ENCODE measurements at regions of chr3 and their contacts with region 1.

Region 1: DNA sequence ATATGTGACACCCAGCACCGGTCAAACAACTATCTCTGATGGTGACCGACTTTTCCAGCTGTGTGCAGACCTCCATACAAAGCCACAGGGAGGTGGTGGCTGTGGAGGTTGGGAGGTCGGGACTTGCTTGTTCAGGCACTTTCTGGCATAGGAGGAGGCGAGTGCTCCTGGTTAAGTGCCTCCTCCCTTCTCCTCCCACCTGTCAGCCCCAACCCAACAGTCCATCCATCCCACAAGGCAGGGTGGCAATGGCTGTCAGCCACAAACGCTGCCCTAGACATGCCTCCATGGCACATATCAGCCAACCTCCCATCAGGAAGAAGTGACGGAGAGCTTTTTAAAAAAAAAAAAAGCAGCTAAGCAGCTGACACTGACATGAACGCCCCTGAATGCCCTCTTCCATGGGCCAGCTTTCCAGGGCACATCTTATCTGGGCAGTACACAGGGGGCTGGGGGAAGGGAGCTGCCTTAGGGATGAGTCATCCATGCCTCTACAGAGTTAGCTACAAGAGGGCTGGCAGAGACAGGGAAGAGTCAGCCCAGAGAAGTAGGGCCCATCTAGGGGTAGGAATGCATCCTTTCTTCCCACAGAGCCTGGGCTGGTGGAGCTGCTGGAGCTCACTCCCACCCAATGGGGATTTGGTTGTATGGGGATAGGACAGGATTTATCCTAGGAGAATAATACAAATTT is 41.2 kb downstream of the CCDC12 start:
- DNase-seq: peak; percentile 86 to 90
- H3K4me3 ChIP-seq: no peak overlapping the region
- H3K27ac ChIP-seq: peak overlapping the region; percentile 53
- H3K4me1 ChIP-seq: peaks cover 63% of the 10 kb centered on the region
- H3K27me3 ChIP-seq: no peaks in the 10 kb centered on the region
- CTCF ChIP-seq: peak; percentile 65

Region 2: DNA sequence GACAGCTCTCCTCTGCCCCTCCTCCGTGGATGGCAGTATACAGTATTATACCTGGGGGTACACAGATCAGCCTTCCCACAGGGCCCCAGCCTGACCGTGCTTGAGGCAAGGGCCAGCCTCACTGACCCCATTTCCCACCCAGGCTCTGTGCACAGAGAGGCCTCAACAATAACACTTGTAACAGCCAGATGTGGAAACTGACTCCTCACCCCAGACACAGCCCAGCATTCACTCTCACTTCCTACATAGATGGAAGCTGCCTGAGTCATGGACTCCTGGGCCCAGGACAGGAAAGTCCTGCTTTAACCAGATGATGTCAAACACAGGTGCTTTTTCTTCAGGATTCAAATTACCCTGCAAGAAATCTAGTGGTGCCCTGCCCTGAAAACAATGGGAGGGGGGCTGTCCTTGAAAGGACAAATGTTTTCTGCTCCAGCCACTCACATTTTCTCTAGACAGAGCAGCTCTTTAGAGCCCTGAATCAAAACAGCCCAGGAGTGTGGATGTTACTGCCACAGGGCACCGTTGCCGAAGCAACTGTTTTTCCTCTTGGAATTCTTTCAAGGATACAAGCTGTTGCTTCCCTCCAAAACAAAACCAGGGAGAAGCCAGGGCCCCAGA is 24.9 kb after region 1 on chr3:
- CTCF ChIA-PET with region 1: interaction called, 3 read pairs
- POLR2A ChIA-PET with region 1: interaction called, 4 read pairs
- intact Hi-C with region 1: loop called (anchors 1 kb)
- DNase-seq: peak; percentile 67 to 85
- H3K4me3 ChIP-seq: no peak overlapping the region
- H3K27ac ChIP-seq: peak overlapping the region; percentile 64
- H3K4me1 ChIP-seq: peaks cover 37% of the 10 kb centered on the region
- H3K27me3 ChIP-seq: no peaks in the 10 kb centered on the region
- CTCF ChIP-seq: no peak

Region 3: DNA sequence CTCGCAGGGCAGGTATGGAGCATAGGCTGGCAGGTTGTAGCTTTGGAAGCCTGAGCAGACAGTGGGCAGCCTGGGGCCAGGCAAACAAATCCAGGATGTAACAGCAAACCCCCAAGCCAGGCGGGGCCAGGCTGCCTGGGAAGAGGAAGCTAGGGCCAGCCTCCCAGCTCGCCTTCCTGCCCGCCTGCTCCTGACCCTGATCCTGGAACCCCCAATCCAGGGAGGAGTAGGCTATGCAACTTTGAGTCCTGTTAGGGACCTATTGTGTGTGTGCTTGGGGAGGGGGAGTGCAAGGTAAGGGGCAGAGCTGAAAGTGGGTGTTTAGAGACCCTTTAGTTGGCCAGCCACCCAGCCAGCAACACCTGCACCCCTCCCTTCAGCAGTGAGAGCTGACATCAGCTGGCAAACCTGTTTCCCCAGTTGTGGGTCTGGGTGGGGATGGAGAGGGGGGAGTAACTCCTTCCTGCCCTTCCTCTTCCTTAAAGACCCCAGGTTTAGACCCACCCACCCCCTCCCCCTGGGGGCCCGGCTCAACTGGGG is 46.7 kb after region 1 on chr3:
- CTCF ChIA-PET with region 1: interaction called, 11 read pairs
- POLR2A ChIA-PET with region 1: interaction called, 15 read pairs
- intact Hi-C with region 1: loop called (anchors 1 kb)
- DNase-seq: peak; percentile 68 to 77
- H3K4me3 ChIP-seq: peak overlapping the region; percentile 48; the same call in 1 of the 2 replicates
- H3K27ac ChIP-seq: peak overlapping the region; percentile 67
- H3K4me1 ChIP-seq: peaks cover 48% of the 10 kb centered on the region
- H3K27me3 ChIP-seq: no peaks in the 10 kb centered on the region
- CTCF ChIP-seq: no peak

Measured in PC-9 (cell line).